ENCODE measurements at regions of chr19 and their contacts with region 1.

Region 1: DNA sequence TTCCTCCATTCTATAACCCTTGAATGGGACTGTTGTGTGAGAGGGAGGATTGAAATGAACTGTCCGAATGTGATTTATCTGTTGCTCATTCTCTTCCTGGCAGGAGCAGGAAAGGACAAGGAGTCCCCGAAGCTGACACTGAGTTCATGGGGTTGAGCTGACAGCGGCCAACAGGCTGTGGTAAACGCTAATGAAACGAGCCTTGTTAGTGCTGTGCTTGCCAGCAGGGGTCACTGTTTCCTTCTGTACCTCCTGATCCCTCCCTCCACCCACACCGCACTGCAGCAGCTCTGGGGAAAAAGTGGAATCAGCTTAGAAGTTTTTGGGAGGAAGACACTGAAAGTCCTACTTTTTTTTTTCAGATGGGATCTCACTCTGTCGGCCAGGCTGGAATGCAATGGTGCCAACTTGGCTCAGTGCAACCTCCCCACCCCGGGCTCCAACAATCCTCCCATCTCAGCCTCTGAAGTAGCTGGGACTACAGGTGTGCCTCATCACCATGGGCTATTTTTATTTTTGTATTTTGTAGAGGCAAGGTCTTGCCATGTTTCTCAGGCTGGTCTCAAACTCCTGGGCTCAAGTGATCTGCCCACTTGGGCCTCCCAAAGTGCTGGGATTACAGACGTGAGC is 6.7 kb upstream of the ZNF761 start:
- DNase-seq: peak; percentile 15
- ATAC-seq: peak; percentile 86
- H3K4me3 ChIP-seq: no peak overlapping the region
- H3K27ac ChIP-seq: no peak overlapping the region
- H3K4me1 ChIP-seq: no peaks in the 10 kb centered on the region
- H3K27me3 ChIP-seq: no peaks in the 10 kb centered on the region
- CTCF ChIP-seq: peak; percentile 52 to 71 (median 66); a peak in 4 of 6 replicates
- EP300 ChIP-seq: no peak
- POLR2A ChIP-seq: no peak
- RAD21 ChIP-seq: peak; percentile 69

Region 2: DNA sequence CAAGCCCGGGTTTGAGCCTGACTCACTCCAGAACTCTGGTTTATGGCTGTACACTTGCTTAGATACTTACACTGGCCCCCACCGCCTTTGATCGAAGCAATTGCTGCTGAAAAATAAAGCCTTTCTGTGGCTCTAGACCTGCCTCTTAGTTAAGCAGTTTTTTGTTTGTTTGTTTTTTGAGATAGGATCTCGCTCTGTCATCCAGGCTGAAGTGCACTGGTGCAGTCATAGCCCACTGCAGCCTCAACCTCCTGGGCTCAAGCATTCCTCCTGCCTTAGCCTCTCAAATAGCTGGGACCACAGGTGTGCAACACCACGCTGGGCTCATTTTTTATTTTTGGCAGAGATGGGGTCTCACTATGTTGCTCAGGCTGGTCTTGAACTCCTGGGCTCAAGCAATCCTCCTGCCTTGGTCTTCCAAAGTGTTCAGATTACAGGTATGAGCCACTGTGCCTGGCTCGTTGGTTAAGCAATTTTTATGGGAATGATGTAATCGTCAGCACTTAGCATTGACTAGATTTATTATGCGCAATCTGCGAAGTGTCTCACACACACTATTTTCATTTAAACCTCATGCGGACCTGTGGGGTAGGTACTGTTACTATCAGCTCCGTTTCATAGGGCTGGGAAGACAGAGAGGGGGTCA is 1213.0 kb before region 1 on chr19:
- CTCF ChIA-PET with region 1: no interaction called
- POLR2A ChIA-PET with region 1: no interaction called
- RAD21 ChIA-PET with region 1: no interaction called
- SMC1A ChIA-PET with region 1: no interaction called
- in situ Hi-C with region 1: no loop called
- intact Hi-C with region 1: no loop called
- DNase-seq: no peak
- ATAC-seq: no peak
- H3K4me3 ChIP-seq: no peak overlapping the region
- H3K27ac ChIP-seq: no peak overlapping the region
- H3K4me1 ChIP-seq: no peaks in the 10 kb centered on the region
- H3K27me3 ChIP-seq: no peaks in the 10 kb centered on the region
- CTCF ChIP-seq: no peak
- EP300 ChIP-seq: no peak
- POLR2A ChIP-seq: no peak
- RAD21 ChIP-seq: no peak

Region 3: GRCh38 chr19:53509443-53509842 is 84.4 kb after region 1 on chr19:
- CTCF ChIA-PET with region 1: interaction called, 11 read pairs
- POLR2A ChIA-PET with region 1: no interaction called
- RAD21 ChIA-PET with region 1: no interaction called
- SMC1A ChIA-PET with region 1: interaction called, 5 read pairs
- in situ Hi-C with region 1: no loop called
- intact Hi-C with region 1: no loop called
- DNase-seq: no peak
- ATAC-seq: no peak; the same call in 2 of the 3 replicates
- H3K4me3 ChIP-seq: no peak overlapping the region
- H3K27ac ChIP-seq: no peak overlapping the region
- H3K4me1 ChIP-seq: no peaks in the 10 kb centered on the region
- H3K27me3 ChIP-seq: no peaks in the 10 kb centered on the region
- CTCF ChIP-seq: no peak
- EP300 ChIP-seq: no peak
- POLR2A ChIP-seq: no peak
- RAD21 ChIP-seq: no peak

Region 4: DNA sequence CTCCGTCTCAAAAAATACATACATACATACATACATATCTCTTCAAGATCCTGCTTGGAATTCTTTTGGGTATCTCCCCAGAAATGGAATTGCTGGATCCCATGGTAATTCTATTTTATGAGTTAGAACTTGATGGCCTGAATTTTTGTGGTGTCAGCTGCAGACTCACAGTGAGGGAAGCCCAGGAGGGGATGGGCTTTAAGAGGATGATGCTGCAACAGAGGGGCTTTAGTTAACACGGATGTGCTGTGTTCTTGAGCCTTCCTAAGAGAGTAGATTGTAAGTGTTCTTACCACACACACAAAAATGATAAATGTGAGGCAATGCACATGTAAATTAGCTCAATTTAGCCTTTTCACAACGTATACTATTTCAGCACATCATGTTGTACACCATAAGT is 598.1 kb after region 1 on chr19:
- CTCF ChIA-PET with region 1: interaction called, 16 read pairs
- POLR2A ChIA-PET with region 1: no interaction called
- RAD21 ChIA-PET with region 1: interaction called, 13 read pairs
- SMC1A ChIA-PET with region 1: interaction called, 3 read pairs
- in situ Hi-C with region 1: loop called (anchors 10 kb)
- intact Hi-C with region 1: loop called (anchors 10 kb)
- DNase-seq: no peak
- ATAC-seq: no peak
- H3K4me3 ChIP-seq: no peak overlapping the region
- H3K27ac ChIP-seq: no peak overlapping the region
- H3K4me1 ChIP-seq: no peaks in the 10 kb centered on the region
- H3K27me3 ChIP-seq: no peaks in the 10 kb centered on the region
- CTCF ChIP-seq: no peak
- EP300 ChIP-seq: no peak
- POLR2A ChIP-seq: no peak
- RAD21 ChIP-seq: no peak

Region 5: DNA sequence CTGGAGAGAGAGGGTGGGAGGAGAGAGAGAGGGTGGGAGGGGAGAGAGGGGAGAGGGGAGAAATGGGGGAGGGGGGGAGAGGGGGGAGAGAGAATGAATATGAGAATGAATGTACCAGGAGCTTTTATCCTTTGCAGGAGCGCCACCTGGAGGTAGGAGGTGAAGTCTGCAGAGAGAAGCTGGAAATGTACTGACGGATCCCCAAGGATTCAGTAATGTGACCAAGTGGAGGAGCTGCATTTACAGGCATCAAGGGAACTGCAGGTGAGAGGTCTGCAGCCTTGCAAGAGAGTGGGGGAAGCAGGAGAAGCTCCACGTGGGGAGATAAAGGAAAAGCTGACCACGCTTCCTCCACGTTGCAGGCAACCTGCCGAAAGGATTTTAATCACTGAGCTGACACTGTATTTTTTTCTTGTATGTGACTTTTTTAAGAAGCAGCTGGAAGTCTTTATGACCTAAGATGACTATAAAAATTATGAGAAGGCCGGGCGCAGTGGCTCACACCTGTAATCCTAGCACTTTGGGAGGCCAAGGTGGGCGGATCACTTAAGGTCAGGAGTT is 604.9 kb after region 1 on chr19:
- CTCF ChIA-PET with region 1: interaction called, 16 read pairs
- POLR2A ChIA-PET with region 1: no interaction called
- RAD21 ChIA-PET with region 1: interaction called, 13 read pairs
- SMC1A ChIA-PET with region 1: no interaction called
- in situ Hi-C with region 1: loop called (anchors 10 kb)
- intact Hi-C with region 1: loop called (anchors 10 kb)
- DNase-seq: no peak
- ATAC-seq: no peak
- H3K4me3 ChIP-seq: no peak overlapping the region
- H3K27ac ChIP-seq: no peak overlapping the region
- H3K4me1 ChIP-seq: no peaks in the 10 kb centered on the region
- H3K27me3 ChIP-seq: no peaks in the 10 kb centered on the region
- CTCF ChIP-seq: peak in 2 of 3 experiments; percentile 42 to 44; a peak in 3 of 6 replicates
- EP300 ChIP-seq: no peak
- POLR2A ChIP-seq: no peak
- RAD21 ChIP-seq: peak; percentile 30; the same call in 1 of the 2 replicates